ENCODE measurements at regions of chr3 and their contacts with region 1.

Region 1: GRCh38 chr3:138180375-138181029 is 5.8 kb upstream of the DBR1 start:
- DNase-seq: peak; percentile 48 to 55
- H3K4me3 ChIP-seq: no peak overlapping the region
- H3K4me3 Mint-ChIP-seq: no peak overlapping the region
- H3K27ac Mint-ChIP-seq: no peak overlapping the region
- H3K4me1 ChIP-seq: 0 out of 2 replicates have a peak, but pooled peaks cover 5% of the 10 kb centered on the region
- H3K4me1 Mint-ChIP-seq: peaks cover 16% of the 10 kb centered on the region
- H3K27me3 ChIP-seq: no peaks in the 10 kb centered on the region
- H3K27me3 Mint-ChIP-seq: peaks cover 9% of the 10 kb centered on the region
- CTCF ChIP-seq: peak; percentile 57 to 68

Region 2: GRCh38 chr3:138089091-138089490 is 91.4 kb before region 1 on chr3:
- CTCF ChIA-PET with region 1: no interaction called
- POLR2A ChIA-PET with region 1: no interaction called
- intact Hi-C with region 1: no loop called
- DNase-seq: no peak
- H3K4me3 ChIP-seq: no peak overlapping the region
- H3K4me3 Mint-ChIP-seq: no peak overlapping the region
- H3K27ac Mint-ChIP-seq: no peak overlapping the region
- H3K4me1 ChIP-seq: no peaks in the 10 kb centered on the region
- H3K4me1 Mint-ChIP-seq: no peaks in the 10 kb centered on the region
- H3K27me3 ChIP-seq: no peaks in the 10 kb centered on the region
- H3K27me3 Mint-ChIP-seq: no peaks in the 10 kb centered on the region
- CTCF ChIP-seq: no peak

Region 3: DNA sequence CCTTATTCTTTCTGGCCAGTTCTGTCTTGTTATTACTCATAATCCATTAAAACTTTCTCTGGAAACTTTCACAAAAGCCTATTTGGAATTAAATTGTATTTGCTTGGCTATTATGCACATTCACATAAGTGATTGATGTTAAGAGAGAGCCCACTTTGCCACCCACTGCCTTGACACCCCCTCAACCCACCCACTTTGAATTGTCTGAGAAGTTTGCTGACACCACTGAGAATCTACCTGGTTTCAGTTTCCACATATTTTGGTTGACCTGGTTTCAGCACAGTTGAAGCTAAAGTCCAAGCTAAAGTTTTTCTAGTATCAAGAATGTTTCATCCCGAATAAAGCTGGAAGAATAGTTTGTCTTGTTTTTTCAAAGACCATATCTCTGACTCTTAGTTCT is 77.5 kb after region 1 on chr3:
- CTCF ChIA-PET with region 1: no interaction called
- POLR2A ChIA-PET with region 1: no interaction called
- intact Hi-C with region 1: loop called (anchors 2 kb)
- DNase-seq: no peak
- H3K4me3 ChIP-seq: no peak overlapping the region
- H3K4me3 Mint-ChIP-seq: no peak overlapping the region
- H3K27ac Mint-ChIP-seq: no peak overlapping the region
- H3K4me1 ChIP-seq: peaks cover 18% of the 10 kb centered on the region
- H3K4me1 Mint-ChIP-seq: peaks cover 25% of the 10 kb centered on the region
- H3K27me3 ChIP-seq: no peaks in the 10 kb centered on the region
- H3K27me3 Mint-ChIP-seq: no peaks in the 10 kb centered on the region
- CTCF ChIP-seq: no peak

Region 4: DNA sequence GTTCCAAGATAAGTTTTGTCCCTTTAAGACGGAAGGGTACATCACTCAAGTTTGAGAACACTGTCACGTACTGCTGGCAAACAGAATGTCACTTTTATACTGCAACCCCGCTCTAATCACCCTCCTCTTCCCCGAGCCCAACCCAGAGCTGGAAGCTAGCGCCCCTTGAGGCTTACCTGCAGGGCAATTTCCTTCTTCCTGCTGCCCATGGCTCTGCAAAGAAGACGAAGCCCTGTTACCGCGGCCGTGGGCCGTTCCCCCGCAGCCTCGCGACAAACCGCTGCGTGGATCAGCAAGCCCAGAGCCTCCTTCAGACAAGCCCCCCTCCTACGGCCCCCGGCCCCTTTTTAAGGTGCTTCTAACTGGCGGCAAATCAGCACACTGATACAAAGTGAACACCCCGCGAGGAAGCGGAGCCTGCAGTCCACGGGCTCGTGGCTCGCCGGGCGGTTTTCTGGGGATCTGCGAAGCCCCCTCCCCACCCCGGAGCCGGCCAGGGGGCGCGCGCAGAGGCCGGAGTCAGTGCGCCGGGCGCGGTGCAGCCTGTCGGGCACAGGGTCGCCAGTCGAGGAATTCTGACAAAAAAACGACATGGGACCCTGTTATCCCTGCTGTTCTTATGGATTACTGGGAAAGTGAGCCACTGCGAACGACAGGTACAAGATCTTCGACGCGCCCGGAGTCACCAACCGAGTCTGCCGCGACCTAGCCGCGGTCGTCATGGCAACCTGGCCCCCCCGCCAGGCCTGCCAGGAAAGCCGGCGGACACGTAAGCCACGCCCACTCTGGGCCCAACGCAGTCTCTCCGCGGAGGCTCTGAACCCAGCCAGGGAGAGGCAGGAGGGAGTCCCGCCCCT is 148.9 kb after region 1 on chr3 and contains the start of gene NME9:
- CTCF ChIA-PET with region 1: no interaction called
- POLR2A ChIA-PET with region 1: no interaction called
- intact Hi-C with region 1: loop called (anchors 1 kb)
- DNase-seq: peak; percentile 93
- H3K4me3 ChIP-seq: peak within 1 kb of the TSS; percentile 80
- H3K4me3 Mint-ChIP-seq: peak within 1 kb of the TSS; percentile 80
- H3K27ac Mint-ChIP-seq: peak within 1 kb of the TSS; percentile 68
- H3K4me1 ChIP-seq: no peaks in the 10 kb centered on the region
- H3K4me1 Mint-ChIP-seq: no peaks in the 10 kb centered on the region
- H3K27me3 ChIP-seq: no peaks in the 10 kb centered on the region
- H3K27me3 Mint-ChIP-seq: no peaks in the 10 kb centered on the region
- CTCF ChIP-seq: peak; percentile 40 to 87
- total RNA-seq, gene NME9: not detected in 2 replicates

Region 5: DNA sequence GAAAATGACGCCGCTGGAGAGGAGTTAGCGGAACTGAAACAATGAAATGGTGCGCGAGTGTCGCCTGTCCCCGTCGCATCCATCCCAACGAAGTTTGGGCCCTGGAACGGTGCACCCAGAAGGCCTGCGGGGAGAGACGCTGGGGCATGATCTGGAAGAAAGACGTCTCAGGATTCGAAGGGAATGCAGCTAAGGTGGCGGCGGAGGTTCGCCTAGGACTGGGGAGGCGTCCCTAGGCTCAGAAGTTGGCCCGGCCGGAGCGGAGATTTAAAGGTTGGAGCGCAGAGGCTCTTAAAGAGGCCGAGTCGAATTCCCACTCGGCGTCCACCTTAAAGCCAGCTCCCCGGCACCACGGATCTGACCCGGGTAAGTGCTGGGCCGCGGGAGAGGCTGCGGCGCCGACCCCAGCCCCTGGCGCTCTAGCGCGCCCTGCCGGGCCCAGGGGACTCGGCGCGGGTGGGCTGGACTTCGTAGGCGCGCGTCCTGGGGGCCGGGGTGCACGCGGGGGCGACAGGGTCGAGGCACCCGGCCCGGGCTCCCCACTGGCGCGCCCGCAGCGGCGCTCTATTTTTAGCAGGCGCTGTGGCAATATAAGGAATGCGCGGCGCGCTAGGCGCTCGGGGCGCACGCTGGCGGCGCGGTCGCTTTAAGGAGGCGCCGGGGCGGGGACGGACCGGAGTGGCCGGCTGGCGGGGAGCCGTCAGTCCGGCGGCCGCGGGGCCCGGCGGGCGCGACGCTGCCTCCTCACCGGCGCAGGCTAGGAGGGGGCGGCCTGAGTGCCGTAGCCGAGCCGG is 167.7 kb after region 1 on chr3 and contains the start of gene MRAS:
- CTCF ChIA-PET with region 1: no interaction called
- POLR2A ChIA-PET with region 1: no interaction called
- intact Hi-C with region 1: loop called (anchors 1 kb)
- DNase-seq: peak; percentile 78 to 85
- H3K4me3 ChIP-seq: peak within 1 kb of the TSS; percentile 48
- H3K4me3 Mint-ChIP-seq: peak within 1 kb of the TSS; percentile 93
- H3K27ac Mint-ChIP-seq: peak within 1 kb of the TSS; percentile 93
- H3K4me1 ChIP-seq: no peaks in the 10 kb centered on the region
- H3K4me1 Mint-ChIP-seq: peaks cover 6% of the 10 kb centered on the region
- H3K27me3 ChIP-seq: no peaks in the 10 kb centered on the region
- H3K27me3 Mint-ChIP-seq: no peaks in the 10 kb centered on the region
- CTCF ChIP-seq: peak; percentile 49 to 55
- total RNA-seq, gene MRAS: 8.5 and 11.4 TPM in 2 replicates

Region 6: GRCh38 chr3:138417559-138417982 is 237.1 kb after region 1 on chr3:
- CTCF ChIA-PET with region 1: no interaction called
- POLR2A ChIA-PET with region 1: no interaction called
- intact Hi-C with region 1: loop called (anchors 5 kb)
- DNase-seq: peak; percentile 86 to 87
- H3K4me3 ChIP-seq: no peak overlapping the region
- H3K4me3 Mint-ChIP-seq: no peak overlapping the region
- H3K27ac Mint-ChIP-seq: no peak overlapping the region
- H3K4me1 ChIP-seq: no peaks in the 10 kb centered on the region
- H3K4me1 Mint-ChIP-seq: no peaks in the 10 kb centered on the region
- H3K27me3 ChIP-seq: no peaks in the 10 kb centered on the region
- H3K27me3 Mint-ChIP-seq: no peaks in the 10 kb centered on the region
- CTCF ChIP-seq: peak; percentile 89 to 93

Region 7: GRCh38 chr3:138426226-138426625 is 245.7 kb after region 1 on chr3:
- CTCF ChIA-PET with region 1: no interaction called
- POLR2A ChIA-PET with region 1: no interaction called
- intact Hi-C with region 1: loop called (anchors 1 kb)
- DNase-seq: peak in 1 of 2 experiments; percentile 32
- H3K4me3 ChIP-seq: no peak overlapping the region
- H3K4me3 Mint-ChIP-seq: no peak overlapping the region
- H3K27ac Mint-ChIP-seq: no peak overlapping the region
- H3K4me1 ChIP-seq: no peaks in the 10 kb centered on the region
- H3K4me1 Mint-ChIP-seq: no peaks in the 10 kb centered on the region
- H3K27me3 ChIP-seq: no peaks in the 10 kb centered on the region
- H3K27me3 Mint-ChIP-seq: no peaks in the 10 kb centered on the region
- CTCF ChIP-seq: peak in 1 of 2 experiments; percentile 45

Measured in Caco-2 (cell line).